ENCODE measurements at regions of chr13 and their contacts with region 1.

Region 1: GRCh38 chr13:101916108-101916757 is 463.8 kb downstream of the ITGBL1 start:
- DNase-seq: no peak

Region 2: GRCh38 chr13:101785858-101786257 is 130.4 kb before region 1 on chr13:
- intact Hi-C with region 1: loop called (anchors 5 kb)
- DNase-seq: no peak

Region 3: DNA sequence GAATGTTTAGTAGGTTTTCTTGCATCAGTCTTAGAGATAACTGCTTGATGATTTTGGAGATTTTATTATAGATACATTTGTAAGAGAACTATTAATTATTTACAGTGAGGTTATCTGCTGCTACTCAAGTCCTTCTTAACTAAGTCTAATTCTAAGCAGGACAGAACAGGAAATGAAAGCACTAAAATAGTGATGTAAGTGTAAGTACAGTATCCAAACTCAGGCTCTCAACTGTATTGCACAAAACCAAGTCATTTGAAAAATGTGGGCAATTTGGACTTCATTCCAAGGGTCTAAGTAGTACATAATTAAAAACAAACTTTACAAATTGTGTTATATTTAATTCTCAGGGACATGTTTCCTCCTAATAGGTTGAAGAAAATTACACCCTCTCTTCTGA is 46.7 kb before region 1 on chr13:
- intact Hi-C with region 1: loop called (anchors 5 kb)
- DNase-seq: no peak